ENCODE measurements at regions of chr20 and their contacts with region 1.

Region 1: GRCh38 chr20:17682103-17682888 is at the start of gene RRBP1:
- DNase-seq: peak; percentile 94 to 98 (median 96)
- ATAC-seq: peak; percentile 91
- H3K4me3 ChIP-seq: peak within 1 kb of the TSS; percentile 50 to 71
- H3K4me3 Mint-ChIP-seq: peak within 1 kb of the TSS; percentile 88
- H3K27ac ChIP-seq: peak within 1 kb of the TSS; percentile 40 to 69
- H3K27ac Mint-ChIP-seq: peak within 1 kb of the TSS; percentile 86
- H3K4me1 ChIP-seq: peaks cover 18% of the 10 kb centered on the region
- H3K4me1 Mint-ChIP-seq: peaks cover 19% of the 10 kb centered on the region
- H3K27me3 ChIP-seq: no peaks in the 10 kb centered on the region
- H3K27me3 Mint-ChIP-seq: peaks cover 25% of the 10 kb centered on the region
- CTCF ChIP-seq: peak; percentile 83
- total RNA-seq, gene RRBP1: 26.4 to 26.5 TPM

Region 2: DNA sequence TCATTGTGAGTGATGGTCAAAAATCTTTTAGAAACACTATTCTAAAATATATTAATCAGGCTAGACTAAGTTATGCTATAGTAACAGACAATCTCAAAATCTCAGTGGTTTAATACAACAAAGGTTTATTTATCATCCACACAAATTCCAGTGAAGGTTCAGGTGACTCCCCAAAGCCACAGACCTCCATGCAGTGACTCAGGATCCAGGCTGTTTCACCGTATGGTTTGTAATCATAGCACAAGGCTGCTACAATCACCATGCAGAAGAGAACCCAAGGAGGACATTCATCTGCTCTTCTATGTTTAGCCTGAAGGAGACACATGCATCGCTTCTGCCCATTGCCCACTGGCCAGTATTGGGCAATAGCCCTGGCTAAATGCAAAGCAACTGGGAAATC is 197.3 kb before region 1 on chr20:
- CTCF ChIA-PET with region 1: no interaction called
- POLR2A ChIA-PET with region 1: no interaction called
- intact Hi-C with region 1: no loop called
- DNase-seq: no peak
- ATAC-seq: no peak
- H3K4me3 ChIP-seq: no peak overlapping the region
- H3K4me3 Mint-ChIP-seq: no peak overlapping the region
- H3K27ac ChIP-seq: no peak overlapping the region
- H3K27ac Mint-ChIP-seq: no peak overlapping the region
- H3K4me1 ChIP-seq: no peaks in the 10 kb centered on the region
- H3K4me1 Mint-ChIP-seq: no peaks in the 10 kb centered on the region
- H3K27me3 ChIP-seq: no peaks in the 10 kb centered on the region
- H3K27me3 Mint-ChIP-seq: peaks cover 12% of the 10 kb centered on the region
- CTCF ChIP-seq: no peak

Region 3: GRCh38 chr20:17504898-17505635 is 177.2 kb before region 1 on chr20:
- CTCF ChIA-PET with region 1: interaction called, 7 read pairs
- POLR2A ChIA-PET with region 1: interaction called, 3 read pairs
- intact Hi-C with region 1: loop called in 1 of 2 experiments (anchors 1 kb)
- DNase-seq: peak; percentile 13 to 84 (median 48)
- ATAC-seq: peak; percentile 72
- H3K4me3 ChIP-seq: peak overlapping the region; percentile 56 to 61
- H3K4me3 Mint-ChIP-seq: peak overlapping the region; percentile 89
- H3K27ac ChIP-seq: peak overlapping the region in 1 of 2 experiments; percentile 64
- H3K27ac Mint-ChIP-seq: peak overlapping the region; percentile 89
- H3K4me1 ChIP-seq: peaks cover 24% of the 10 kb centered on the region
- H3K4me1 Mint-ChIP-seq: peaks cover 36% of the 10 kb centered on the region
- H3K27me3 ChIP-seq: no peaks in the 10 kb centered on the region
- H3K27me3 Mint-ChIP-seq: no peaks in the 10 kb centered on the region
- CTCF ChIP-seq: peak; percentile 84

Region 4: DNA sequence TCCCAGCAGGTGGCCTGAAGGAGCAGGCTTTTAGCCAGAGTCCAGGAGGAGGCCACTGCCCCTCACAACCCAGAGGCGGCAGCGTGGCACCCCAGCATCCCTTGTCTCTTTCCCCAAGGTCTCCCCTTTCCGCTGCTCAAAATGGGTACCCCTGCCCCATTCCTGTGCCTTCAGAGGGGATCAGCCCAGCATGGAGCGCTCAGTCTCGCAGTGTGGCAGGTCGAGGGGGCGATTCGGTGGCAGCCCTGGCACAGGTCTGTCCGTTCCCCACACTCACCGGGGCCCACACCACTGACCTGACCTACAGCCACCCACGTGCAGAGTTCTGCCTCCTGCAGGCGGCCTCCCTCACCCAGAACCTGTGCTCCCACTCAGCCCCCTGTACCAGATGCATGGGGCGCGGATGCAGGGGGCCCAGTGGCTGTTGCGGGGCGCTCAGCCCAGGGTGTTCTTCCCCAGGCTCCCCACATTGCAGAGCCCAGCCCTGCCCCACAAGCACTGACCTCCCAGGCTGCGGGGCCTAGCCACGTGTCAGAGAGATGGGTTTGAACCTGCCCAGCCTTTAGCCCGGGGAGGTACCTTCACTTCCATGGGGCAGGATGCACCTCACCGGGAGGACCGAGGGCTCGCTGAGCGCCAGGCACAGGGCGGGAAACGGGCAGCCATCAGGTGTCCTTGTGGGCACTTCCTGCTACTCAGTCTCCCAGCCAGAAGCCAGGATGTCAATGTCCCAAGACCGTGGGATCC is 70.6 kb before region 1 on chr20:
- CTCF ChIA-PET with region 1: interaction called, 8 read pairs
- POLR2A ChIA-PET with region 1: interaction called, 7 read pairs
- intact Hi-C with region 1: loop called (anchors 2 to 5 kb)
- DNase-seq: peak in 2 of 9 experiments; percentile 29 to 39
- ATAC-seq: no peak
- H3K4me3 ChIP-seq: no peak overlapping the region
- H3K4me3 Mint-ChIP-seq: peak overlapping the region; percentile 69
- H3K27ac ChIP-seq: peak overlapping the region; percentile 43 to 87
- H3K27ac Mint-ChIP-seq: peak overlapping the region; percentile 99
- H3K4me1 ChIP-seq: peaks cover 41% of the 10 kb centered on the region
- H3K4me1 Mint-ChIP-seq: peaks cover 44% of the 10 kb centered on the region
- H3K27me3 ChIP-seq: no peaks in the 10 kb centered on the region
- H3K27me3 Mint-ChIP-seq: no peaks in the 10 kb centered on the region
- CTCF ChIP-seq: peak; percentile 42

Region 5: DNA sequence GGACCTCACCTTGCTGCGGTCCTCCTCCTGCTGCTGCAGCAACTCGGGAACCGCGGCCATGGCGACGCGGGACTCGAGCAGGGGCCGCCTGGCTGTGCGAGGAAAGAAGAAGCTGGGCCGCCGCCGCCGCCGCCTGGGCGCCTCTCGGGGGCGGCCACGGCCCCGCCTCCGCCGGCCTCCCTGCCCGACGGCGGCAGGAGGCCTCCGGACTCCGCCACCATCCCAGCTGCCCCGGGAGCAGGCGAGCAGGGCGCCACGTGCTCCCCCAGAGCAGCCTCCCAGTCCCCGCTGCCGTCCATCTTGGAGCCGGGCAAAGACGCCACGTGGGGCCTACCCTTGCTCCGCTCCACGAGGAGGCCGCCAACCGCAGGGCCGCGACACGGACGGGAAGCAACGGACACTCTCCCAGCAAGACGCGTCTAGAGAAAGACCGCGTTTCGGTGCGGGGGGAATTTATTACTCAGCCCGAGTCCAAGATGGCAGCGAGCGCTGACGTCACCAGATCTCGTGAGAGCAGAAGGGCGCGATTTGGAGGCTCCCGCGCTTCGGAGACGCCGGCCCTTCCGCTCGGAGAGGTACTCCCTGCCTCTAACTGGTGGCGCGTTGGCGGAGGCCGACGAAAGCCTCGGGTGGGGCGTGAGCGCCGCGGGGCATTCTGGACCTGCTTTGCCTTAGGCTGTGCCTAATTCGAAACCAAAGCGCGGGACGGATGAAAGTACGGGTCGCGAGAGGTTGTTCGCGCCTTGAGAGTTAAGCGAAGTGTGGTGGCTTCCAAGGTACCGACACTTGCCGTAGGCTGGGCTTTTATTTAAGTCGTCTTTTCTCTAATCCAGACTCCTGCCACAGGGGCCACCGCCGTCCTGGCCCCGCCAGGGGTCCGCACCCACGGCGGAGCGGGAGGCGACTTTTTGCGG is 286.3 kb after region 1 on chr20 and contains the starts of genes MGME1 and SNX5:
- CTCF ChIA-PET with region 1: interaction called, 11 read pairs
- POLR2A ChIA-PET with region 1: interaction called, 6 read pairs
- intact Hi-C with region 1: loop called (anchors 1 kb)
- DNase-seq: peak; percentile 97 to 99 (median 98)
- ATAC-seq: peak; percentile 89
- H3K4me3 ChIP-seq: peak within 1 kb of the TSS; percentile 91 to 99
- H3K4me3 Mint-ChIP-seq: peak within 1 kb of the TSS; percentile 97
- H3K27ac ChIP-seq: peak within 1 kb of the TSS; percentile 91 to 99
- H3K27ac Mint-ChIP-seq: peak within 1 kb of the TSS; percentile 98
- H3K4me1 ChIP-seq: peaks cover 63% of the 10 kb centered on the region
- H3K4me1 Mint-ChIP-seq: peaks cover 78% of the 10 kb centered on the region
- H3K27me3 ChIP-seq: no peaks in the 10 kb centered on the region
- H3K27me3 Mint-ChIP-seq: no peaks in the 10 kb centered on the region
- CTCF ChIP-seq: no peak
- total RNA-seq, gene MGME1: 4.5 to 4.7 TPM
- total RNA-seq, gene SNX5: 47.3 to 52.0 TPM

Region 6: DNA sequence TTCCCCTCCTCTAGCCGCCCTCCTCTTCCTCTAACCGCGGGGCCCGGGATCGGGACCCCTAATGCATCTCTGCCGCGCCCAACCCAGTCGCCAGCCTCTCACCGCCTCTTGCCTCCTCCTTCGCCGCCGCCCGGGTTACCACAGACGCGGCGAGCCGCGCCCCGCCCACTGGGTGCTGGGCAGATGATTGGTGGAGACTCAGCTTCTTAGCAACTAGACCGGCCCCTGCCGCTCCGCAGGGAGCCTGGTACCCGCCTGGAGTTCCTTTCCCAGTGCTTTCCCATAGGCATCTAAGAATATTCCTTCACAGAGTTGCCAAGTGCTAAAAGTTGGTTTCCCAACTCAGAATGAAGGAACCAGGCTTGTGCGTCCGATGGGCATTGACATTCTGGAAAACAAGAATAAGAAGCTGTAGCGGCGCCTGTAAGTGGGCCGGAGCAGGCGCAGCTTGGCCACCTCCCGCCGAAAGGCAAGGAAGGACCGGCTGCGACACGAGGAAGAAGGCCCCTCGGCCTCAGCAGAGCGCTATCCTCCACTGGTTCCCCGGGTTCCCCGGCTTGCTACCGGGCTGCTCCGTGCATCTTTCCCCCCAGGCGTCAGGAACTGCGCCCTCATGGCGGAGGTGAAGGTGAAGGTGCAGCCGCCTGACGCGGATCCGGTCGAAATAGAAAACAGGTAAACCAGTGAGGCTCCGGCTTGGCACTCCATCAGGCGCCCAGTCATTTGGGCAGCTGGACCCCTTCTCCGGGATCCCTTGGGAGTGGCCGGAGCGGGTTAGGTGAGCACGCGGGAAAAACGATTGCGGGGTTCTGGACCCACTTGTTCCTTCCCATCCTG is 784.8 kb after region 1 on chr20 and contains the starts of genes DZANK1 and POLR3F:
- CTCF ChIA-PET with region 1: no interaction called
- POLR2A ChIA-PET with region 1: interaction called, 4 read pairs
- intact Hi-C with region 1: loop called (anchors 5 kb)
- DNase-seq: peak; percentile 84 to 95 (median 93)
- ATAC-seq: peak; percentile 90
- H3K4me3 ChIP-seq: peak within 1 kb of the TSS; percentile 79 to 93
- H3K4me3 Mint-ChIP-seq: peak within 1 kb of the TSS; percentile 97
- H3K27ac ChIP-seq: peak within 1 kb of the TSS; percentile 73 to 92
- H3K27ac Mint-ChIP-seq: peak within 1 kb of the TSS; percentile 97
- H3K4me1 ChIP-seq: peaks cover 16% of the 10 kb centered on the region
- H3K4me1 Mint-ChIP-seq: peaks cover 24% of the 10 kb centered on the region
- H3K27me3 ChIP-seq: no peaks in the 10 kb centered on the region
- H3K27me3 Mint-ChIP-seq: no peaks in the 10 kb centered on the region
- CTCF ChIP-seq: no peak
- total RNA-seq, gene DZANK1: 2.0 to 2.3 TPM
- total RNA-seq, gene POLR3F: 11.5 TPM

Region 7: GRCh38 chr20:18793625-18794427 is 1111.5 kb after region 1 on chr20:
- CTCF ChIA-PET with region 1: no interaction called
- POLR2A ChIA-PET with region 1: interaction called, 3 read pairs
- intact Hi-C with region 1: loop called in 1 of 2 experiments (anchors 5 kb)
- DNase-seq: peak; percentile 78 to 98 (median 88)
- ATAC-seq: peak; percentile 93
- H3K4me3 ChIP-seq: peak overlapping the region; percentile 73 to 79
- H3K4me3 Mint-ChIP-seq: peak overlapping the region; percentile 96
- H3K27ac ChIP-seq: peak overlapping the region; percentile 94 to 95
- H3K27ac Mint-ChIP-seq: peak overlapping the region; percentile 100
- H3K4me1 ChIP-seq: peaks cover 12% of the 10 kb centered on the region
- H3K4me1 Mint-ChIP-seq: peaks cover 17% of the 10 kb centered on the region
- H3K27me3 ChIP-seq: no peaks in the 10 kb centered on the region
- H3K27me3 Mint-ChIP-seq: peaks cover 19% of the 10 kb centered on the region
- CTCF ChIP-seq: no peak